ENCODE measurements at regions of chr19 and their contacts with region 1.

Region 1: GRCh38 chr19:33208904-33209849 is 15.0 kb downstream of the LRP3 start:
- DNase-seq: no peak
- H3K4me3 ChIP-seq: no peak overlapping the region
- CTCF ChIP-seq: no peak
- POLR2A ChIP-seq: no peak

Region 2: DNA sequence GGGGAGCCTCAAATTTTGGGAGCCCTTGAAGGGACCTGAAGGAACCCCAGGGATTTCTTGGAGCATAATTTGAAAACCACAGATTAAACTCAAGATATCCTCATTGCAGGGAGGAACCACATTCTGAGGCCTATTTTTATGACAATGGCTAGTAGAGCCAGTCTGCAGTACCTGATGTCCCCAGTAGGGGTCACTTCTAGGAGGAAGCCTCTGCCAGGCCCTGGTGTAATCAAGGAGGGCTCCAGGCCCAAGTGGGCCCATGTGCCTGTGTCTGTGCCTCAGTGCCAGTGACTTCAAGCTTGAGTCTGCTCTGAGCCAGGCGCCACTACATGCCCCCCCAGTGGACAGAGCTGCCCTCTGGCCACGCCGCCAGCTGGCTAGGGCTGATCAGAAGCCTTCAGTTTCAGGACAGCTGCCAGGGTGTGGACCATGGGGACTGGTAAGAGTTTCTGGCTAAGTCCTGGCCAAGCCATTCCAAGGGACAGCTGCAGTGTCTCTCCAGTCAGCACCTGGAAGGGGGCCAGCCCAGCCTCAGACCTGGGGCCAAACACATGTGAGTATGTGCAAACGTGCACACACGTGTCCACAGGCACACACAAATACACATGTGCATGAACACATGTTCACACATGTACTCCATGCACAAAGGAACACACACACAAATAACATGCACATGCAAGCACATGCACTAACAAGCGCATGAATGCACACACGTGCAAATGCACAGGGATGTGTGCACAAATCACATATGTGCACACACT is 37.0 kb after region 1 on chr19:
- intact Hi-C with region 1: no loop called
- DNase-seq: no peak
- H3K4me3 ChIP-seq: no peak overlapping the region
- CTCF ChIP-seq: no peak
- POLR2A ChIP-seq: no peak

Region 3: GRCh38 chr19:33758541-33759013 is 549.4 kb after region 1 on chr19:
- intact Hi-C with region 1: loop called (anchors 10 kb)
- DNase-seq: no peak
- H3K4me3 ChIP-seq: no peak overlapping the region
- CTCF ChIP-seq: no peak
- POLR2A ChIP-seq: no peak

Measured in lower leg skin (tissue), 4 donors.